ENCODE measurements at regions of chr22 and their contacts with region 1.

Region 1: DNA sequence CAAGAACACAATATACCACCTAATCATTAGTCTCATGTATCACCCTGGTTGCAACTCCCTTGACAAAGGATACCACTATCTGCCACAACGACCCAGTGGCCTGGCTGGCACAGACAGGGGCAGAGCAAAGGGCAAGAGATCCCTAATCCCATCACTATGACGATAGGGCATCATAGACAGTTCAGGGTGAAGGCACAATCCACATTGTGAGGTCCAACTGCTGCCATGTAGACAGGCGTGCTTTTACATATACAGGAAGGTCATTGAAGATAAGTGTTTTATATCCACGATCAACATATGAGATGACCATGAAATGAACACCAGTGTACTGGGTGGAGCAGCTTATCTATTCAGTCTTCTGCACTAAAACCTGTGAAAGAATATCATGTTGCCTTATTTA is 94.6 kb downstream of the IGLL1 start:
- DNase-seq: no peak

Region 2: DNA sequence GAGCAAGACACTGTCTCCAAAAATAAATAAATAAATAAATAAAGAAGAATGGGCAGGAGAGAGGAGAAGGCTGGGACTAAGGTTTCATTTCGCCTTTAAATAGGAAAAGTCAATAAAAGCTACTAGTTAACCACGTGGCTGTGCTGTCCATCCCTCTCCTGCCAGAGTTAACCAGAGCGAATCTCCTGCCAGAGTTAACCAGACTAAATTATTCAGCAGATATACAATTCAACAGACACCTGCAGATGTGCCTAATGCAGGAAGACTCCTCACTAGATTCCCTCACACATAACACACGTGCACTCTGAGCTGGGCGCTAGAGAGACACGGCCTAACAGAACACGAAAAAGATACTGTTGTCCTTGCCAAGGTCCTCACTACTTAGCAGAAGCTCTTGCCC is 61.5 kb before region 1 on chr22:
- intact Hi-C with region 1: loop called in 1 of 2 experiments (anchors 10 kb)
- DNase-seq: no peak